ENCODE measurements at regions of chr3 and their contacts with region 1.

Region 1: GRCh38 chr3:150495563-150496168 is 50.6 kb downstream of the SERP1 start:
- DNase-seq: peak; percentile 38
- H3K4me3 ChIP-seq: no peak overlapping the region
- H3K27ac ChIP-seq: no peak overlapping the region
- H3K4me1 ChIP-seq: no peaks in the 10 kb centered on the region
- H3K27me3 ChIP-seq: no peaks in the 10 kb centered on the region
- CTCF ChIP-seq: peak; percentile 83

Region 2: GRCh38 chr3:150227839-150228238 is 267.8 kb before region 1 on chr3:
- intact Hi-C with region 1: loop called (anchors 5 kb)
- DNase-seq: peak; percentile 79
- H3K4me3 ChIP-seq: no peak overlapping the region
- H3K27ac ChIP-seq: no peak overlapping the region
- H3K4me1 ChIP-seq: no peaks in the 10 kb centered on the region
- H3K27me3 ChIP-seq: no peaks in the 10 kb centered on the region
- CTCF ChIP-seq: peak; percentile 68

Region 3: GRCh38 chr3:150286390-150287147 is 209.1 kb before region 1 on chr3:
- intact Hi-C with region 1: loop called (anchors 5 kb)
- DNase-seq: no peak
- H3K4me3 ChIP-seq: no peak overlapping the region
- H3K27ac ChIP-seq: no peak overlapping the region
- H3K4me1 ChIP-seq: no peaks in the 10 kb centered on the region
- H3K27me3 ChIP-seq: no peaks in the 10 kb centered on the region
- CTCF ChIP-seq: peak; percentile 60

Region 4: DNA sequence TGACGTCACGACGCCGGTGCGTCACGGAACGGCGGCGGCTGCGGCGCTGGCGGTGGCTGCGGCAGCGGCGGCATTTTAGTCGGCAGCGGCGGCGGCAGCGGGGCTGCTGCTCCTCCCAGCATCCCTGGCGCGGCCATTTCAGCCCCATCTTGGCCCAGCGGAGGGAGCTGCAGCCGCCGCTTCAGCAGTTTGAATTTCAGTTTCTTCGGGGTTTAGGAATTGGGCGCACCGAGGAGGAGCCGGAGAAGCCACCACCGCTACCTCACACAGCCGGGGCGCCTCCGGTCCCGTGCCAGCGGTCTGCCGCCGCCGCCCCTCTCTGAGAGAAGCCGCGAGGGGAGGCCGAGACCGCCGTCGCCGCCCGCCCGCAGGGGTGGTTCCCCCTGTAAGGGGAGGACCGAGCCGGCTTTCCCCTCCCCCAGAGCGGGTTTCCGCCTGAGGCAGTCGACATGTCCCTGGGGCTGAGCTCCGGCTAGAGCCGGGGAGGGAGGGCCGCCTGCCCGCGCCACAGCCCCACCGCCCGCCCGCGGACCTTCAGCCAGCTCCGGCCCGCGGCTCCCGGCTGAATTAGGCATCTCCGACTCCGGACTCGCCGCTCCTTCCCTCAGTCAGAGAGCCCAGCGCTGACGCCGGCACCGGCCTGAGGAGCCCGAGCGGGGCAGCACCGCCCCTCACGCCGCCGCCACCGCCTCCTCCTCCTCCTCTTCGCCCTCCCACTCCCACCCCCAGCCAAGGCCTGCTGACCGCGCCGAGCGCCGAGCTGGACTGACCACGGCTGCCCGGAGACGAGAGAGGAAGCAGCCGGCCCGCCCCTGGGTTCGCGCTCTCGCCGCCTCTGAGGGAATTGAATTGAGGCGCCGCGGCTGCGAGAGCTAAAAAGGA is 87.2 kb before region 1 on chr3 and contains the start of gene TSC22D2:
- intact Hi-C with region 1: loop called (anchors 5 kb)
- DNase-seq: peak; percentile 98
- H3K4me3 ChIP-seq: peak within 1 kb of the TSS; percentile 97
- H3K27ac ChIP-seq: peak within 1 kb of the TSS; percentile 100
- H3K4me1 ChIP-seq: no peaks in the 10 kb centered on the region
- H3K27me3 ChIP-seq: no peaks in the 10 kb centered on the region
- CTCF ChIP-seq: no peak
- total RNA-seq, gene TSC22D2: 16.7 to 31.7 TPM

Measured in colonic mucosa (tissue), 4 donors.